Lower leg skin (tissue), 4 donors: ENCODE measurements at regions of chr1 and their contacts with region 1.

Region 1: GRCh38 chr1:156931974-156932710 is 11.7 kb downstream of the LRRC71 start:
- DNase-seq: no peak
- H3K4me3 ChIP-seq: no peak overlapping the region
- CTCF ChIP-seq: no peak
- POLR2A ChIP-seq: no peak

Region 2: DNA sequence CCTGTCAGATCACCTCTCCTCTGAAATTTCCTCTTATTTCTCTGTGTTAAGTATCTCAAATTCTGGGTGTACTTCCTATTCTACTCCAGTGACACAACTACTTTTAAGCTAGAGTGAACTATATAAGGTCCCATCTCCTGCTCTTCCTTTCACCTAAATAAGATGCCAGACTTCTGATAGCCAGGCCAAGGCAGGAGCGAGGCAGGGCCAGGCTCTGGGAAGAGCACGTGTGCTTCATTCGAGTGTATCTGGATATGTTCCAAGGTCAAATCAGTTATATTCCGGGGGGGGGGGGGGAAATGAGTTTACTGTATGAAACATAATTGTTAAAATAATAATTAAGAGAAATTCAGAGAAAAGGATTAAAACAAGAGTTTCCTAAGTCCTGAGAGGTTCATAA is 48.4 kb after region 1 on chr1:
- intact Hi-C with region 1: loop called (anchors 2 kb)
- DNase-seq: no peak
- H3K4me3 ChIP-seq: no peak overlapping the region
- CTCF ChIP-seq: no peak
- POLR2A ChIP-seq: no peak

Region 3: DNA sequence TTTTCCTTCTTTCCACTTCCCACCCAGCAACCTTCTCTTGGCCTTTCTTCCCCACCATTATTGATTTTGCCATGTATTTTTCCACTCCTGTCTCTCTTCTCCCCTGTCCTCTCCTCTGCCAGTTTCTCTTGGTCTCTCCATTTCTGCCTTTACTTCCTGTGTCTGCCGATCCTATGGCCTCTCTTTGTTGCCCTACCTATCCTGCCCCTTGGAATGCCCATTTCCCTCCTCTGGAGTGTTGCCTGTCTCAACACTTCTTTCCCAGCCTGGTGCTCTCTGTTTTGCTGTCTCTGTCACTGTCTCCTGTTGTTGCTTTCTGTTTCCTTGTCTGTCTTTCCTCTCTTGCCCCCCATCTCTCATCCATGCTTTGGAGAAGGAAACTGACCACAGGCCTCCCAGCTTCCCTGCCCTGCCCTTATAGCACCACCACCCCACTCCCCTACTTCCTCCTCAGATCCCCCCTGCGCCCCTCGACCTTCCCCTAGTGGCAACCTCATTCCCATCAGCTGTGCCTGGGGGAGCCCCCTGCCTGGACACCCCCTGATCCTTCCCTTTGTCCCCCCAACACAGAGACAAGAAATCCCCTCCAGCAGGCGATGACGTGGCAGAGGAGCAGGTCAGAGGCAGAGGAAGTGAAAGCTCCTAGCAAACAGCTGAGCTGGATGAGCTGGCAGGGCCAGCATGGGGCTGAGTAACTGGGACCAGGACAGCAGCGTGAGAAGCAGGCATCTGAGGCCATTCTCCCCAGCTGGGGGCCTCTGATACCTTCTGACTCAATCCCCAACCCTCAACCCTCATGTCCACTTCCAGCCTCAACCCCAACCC is 174.1 kb after region 1 on chr1:
- intact Hi-C with region 1: no loop called
- DNase-seq: peak in 1 of 2 donors; percentile 78
- H3K4me3 ChIP-seq: no peak overlapping the region
- CTCF ChIP-seq: no peak
- POLR2A ChIP-seq: no peak

Region 4: GRCh38 chr1:158400871-158401270 is 1468.7 kb after region 1 on chr1:
- intact Hi-C with region 1: no loop called
- DNase-seq: no peak
- H3K4me3 ChIP-seq: no peak overlapping the region
- CTCF ChIP-seq: no peak
- POLR2A ChIP-seq: no peak